SK-N-SH (cell line): ENCODE measurements at regions of chr1 and their contacts with region 1.

Region 1: DNA sequence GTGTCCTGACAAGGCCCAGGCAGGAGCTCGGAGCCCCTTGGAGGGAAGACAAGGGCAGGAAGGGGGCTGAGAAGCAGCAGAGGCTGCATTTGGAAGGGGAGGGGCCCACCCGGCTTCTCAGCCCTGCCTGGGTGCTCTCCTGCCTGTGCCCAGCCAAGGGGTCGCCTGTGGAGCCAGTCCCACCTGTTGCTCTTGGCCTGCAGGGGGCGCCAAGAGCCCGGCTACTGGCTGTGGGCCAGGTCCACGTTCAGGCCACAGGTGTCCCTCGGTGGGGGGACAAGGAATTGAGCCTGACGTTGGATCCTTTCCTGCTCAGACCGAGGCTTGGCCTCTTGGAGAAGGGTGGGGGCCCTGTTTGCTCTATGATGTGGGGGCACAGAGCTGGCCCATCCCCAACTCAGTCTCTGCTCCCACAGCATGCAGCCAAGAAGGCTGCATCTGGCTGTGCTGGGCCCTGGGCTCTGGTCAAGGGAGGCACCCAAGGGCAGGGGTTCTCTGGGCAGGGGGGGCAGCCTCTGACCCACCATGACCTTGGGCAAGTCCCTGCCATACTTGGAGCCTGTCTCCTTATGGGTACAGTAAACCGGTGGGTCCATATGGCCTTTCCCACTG is 10.9 kb downstream of the WNT4 start:
- DNase-seq: peak; percentile 92
- H3K4me3 ChIP-seq: no peak overlapping the region; a peak in 1 of 4 replicates
- H3K27ac ChIP-seq: no peak overlapping the region
- H3K4me1 ChIP-seq: peaks cover 7 to 13% of the 10 kb centered on the region in 2 experiments; a peak in 3 of 4 replicates
- H3K27me3 ChIP-seq: no peaks in the 10 kb centered on the region
- CTCF ChIP-seq: peak; percentile 75
- EP300 ChIP-seq: no peak
- RAD21 ChIP-seq: peak; percentile 87

Region 2: GRCh38 chr1:22105611-22106207 is 26.3 kb before region 1 on chr1:
- CTCF ChIA-PET with region 1: interaction called, 82 read pairs
- POLR2A ChIA-PET with region 1: no interaction called
- DNase-seq: peak; percentile 64
- H3K4me3 ChIP-seq: no peak overlapping the region; a peak in 1 of 4 replicates
- H3K27ac ChIP-seq: no peak overlapping the region; a peak in 2 of 4 replicates
- H3K4me1 ChIP-seq: peaks cover 4 to 22% of the 10 kb centered on the region in 2 experiments; a peak in 1 of 4 replicates
- H3K27me3 ChIP-seq: no peaks in the 10 kb centered on the region
- CTCF ChIP-seq: peak; percentile 86
- EP300 ChIP-seq: no peak
- RAD21 ChIP-seq: peak; percentile 87

Region 3: DNA sequence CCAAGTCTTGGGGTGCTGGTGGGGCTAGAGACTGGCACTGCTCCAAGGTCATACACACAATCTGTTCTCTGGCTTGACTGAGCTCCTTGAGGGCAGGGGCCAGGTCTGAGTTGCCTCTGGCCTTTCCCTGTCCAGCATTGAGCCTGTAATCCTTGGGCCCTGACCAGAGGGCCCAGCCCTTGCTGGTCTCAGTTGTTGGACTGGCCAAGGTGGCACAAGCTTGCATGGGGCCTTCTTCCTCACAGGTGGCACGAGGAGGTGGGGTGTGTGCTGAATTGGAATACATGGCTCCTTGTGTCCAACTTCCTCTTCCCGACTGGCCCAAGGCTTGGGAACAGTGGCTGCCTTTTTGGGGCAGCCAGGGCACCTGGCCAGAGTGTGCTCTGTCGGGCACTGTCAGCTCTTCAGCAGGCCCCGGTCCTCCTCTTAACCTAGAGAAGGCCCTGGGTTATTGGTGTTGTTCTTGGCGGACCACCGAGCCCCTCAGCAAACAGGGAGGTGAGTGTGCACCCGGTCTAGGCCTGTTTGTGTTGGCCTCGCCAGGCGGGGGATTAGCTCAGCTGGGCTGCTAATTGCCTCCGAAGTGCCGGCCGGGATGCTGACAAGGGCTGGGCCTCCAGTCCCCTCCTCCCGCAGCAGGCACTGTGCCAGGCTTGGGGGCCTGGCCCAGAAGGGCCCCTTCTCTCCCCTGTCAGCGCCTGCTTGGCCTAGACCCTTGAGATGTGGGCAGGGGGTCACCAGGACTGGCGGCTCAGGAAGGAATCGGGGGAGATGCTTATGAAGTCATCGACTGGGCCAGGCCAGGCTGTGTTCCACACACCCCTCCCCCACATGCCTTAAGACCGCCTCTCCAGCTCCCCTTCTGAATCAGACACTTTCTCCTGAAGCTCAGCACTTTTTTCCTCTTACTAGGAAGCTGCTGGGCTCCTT is 17.6 kb before region 1 on chr1:
- CTCF ChIA-PET with region 1: interaction called, 82 read pairs
- POLR2A ChIA-PET with region 1: no interaction called
- DNase-seq: peak; percentile 27
- H3K4me3 ChIP-seq: no peak overlapping the region
- H3K27ac ChIP-seq: peak overlapping the region in 1 of 2 experiments; percentile 25; a peak in 1 of 4 replicates
- H3K4me1 ChIP-seq: peaks cover 18 to 57% of the 10 kb centered on the region in 2 experiments
- H3K27me3 ChIP-seq: no peaks in the 10 kb centered on the region
- CTCF ChIP-seq: no peak
- EP300 ChIP-seq: no peak
- RAD21 ChIP-seq: no peak

Region 4: DNA sequence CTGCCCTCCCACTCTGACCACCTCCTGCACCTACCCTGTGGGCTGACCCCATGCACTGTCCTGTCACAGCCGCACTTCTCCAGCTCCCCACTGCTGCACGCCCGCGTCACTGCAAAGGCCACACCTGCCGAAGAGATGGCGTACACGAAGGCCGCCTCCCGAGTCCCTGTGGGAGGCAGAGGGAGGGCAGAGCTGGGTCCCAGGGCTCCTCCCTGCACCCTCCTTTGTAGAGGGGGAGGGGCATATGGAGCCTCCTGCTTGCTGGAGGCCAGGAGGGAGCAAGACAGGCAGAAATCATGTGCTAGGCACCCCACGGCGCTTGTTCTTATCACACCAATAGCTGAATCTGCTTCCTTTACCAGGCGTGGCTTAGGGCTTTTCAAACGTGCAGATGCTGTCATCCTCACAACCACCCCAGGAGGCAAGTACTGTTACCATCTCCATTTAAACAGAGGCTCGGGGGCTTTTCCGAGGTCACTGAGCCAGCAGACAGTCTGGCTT is 10.5 kb before region 1 on chr1:
- CTCF ChIA-PET with region 1: interaction called, 34 read pairs
- POLR2A ChIA-PET with region 1: no interaction called
- DNase-seq: peak; percentile 81
- H3K4me3 ChIP-seq: no peak overlapping the region
- H3K27ac ChIP-seq: peak overlapping the region in 1 of 2 experiments; percentile 74; a peak in 2 of 4 replicates
- H3K4me1 ChIP-seq: peaks cover 0 to 40% of the 10 kb centered on the region in 2 experiments; a peak in 1 of 4 replicates
- H3K27me3 ChIP-seq: no peaks in the 10 kb centered on the region
- CTCF ChIP-seq: no peak
- EP300 ChIP-seq: 0 out of 4 replicates have a peak, but pooled peaks of 1 of the 2 experiments have one; percentile 17
- RAD21 ChIP-seq: no peak

Region 5: GRCh38 chr1:22143065-22144036 is 11.4 kb after region 1 on chr1 and contains the start of gene WNT4:
- CTCF ChIA-PET with region 1: interaction called, 28 read pairs
- POLR2A ChIA-PET with region 1: no interaction called
- DNase-seq: peak; percentile 92
- H3K4me3 ChIP-seq: peak within 1 kb of the TSS; percentile 52 to 53
- H3K27ac ChIP-seq: no peak within 1 kb of the TSS
- H3K4me1 ChIP-seq: peaks cover 0 to 21% of the 10 kb centered on the region in 2 experiments; a peak in 1 of 4 replicates
- H3K27me3 ChIP-seq: peaks cover 5% of the 10 kb centered on the region; the same call in 1 of the 2 replicates
- CTCF ChIP-seq: no peak
- EP300 ChIP-seq: no peak
- RAD21 ChIP-seq: no peak
- polyA plus RNA-seq, gene WNT4: 0.03 and 0.08 TPM in 2 replicates

Region 6: GRCh38 chr1:22275721-22276395 is 143.9 kb after region 1 on chr1:
- CTCF ChIA-PET with region 1: interaction called, 40 read pairs
- POLR2A ChIA-PET with region 1: no interaction called
- DNase-seq: peak; percentile 83
- H3K4me3 ChIP-seq: no peak overlapping the region; a peak in 1 of 4 replicates
- H3K27ac ChIP-seq: no peak overlapping the region
- H3K4me1 ChIP-seq: peaks cover 0 to 2% of the 10 kb centered on the region in 2 experiments; a peak in 1 of 4 replicates
- H3K27me3 ChIP-seq: peaks cover 11% of the 10 kb centered on the region; the same call in 1 of the 2 replicates
- CTCF ChIP-seq: peak; percentile 71
- EP300 ChIP-seq: no peak
- RAD21 ChIP-seq: peak; percentile 79

Region 7: DNA sequence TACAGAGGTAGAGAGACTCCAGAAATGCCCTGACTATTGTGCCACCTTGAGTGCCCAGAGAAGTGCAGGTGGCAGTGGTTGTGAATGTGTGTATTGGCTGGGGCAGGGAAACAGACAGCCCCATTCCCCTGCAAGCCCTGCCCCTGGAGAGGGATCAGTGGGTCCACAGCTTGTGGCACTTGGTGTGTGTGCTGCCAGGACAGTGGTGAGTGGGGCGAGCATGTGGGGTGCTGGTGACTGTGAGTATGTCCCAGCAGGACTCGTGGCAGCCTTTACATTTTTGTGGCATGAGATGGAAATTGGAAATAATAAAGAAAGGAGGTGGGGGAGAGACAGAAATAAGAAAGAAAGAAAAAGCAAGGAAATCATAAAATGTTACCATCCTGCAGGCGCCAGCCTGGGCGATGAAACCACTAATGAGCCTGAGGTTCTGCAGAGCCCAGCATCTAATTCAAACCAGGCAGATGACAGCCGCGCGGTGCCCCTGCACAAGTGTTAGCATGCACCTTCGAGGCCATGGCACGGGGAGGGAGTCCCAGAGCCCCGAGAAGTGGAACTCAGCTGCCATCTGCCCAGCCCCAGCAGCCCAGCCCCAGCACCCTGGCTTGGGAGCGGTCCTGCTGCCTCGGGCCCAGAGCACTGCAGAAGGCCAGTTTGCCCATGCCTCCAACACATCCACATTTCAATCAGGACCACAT is 270.5 kb after region 1 on chr1:
- CTCF ChIA-PET with region 1: interaction called, 173 read pairs
- POLR2A ChIA-PET with region 1: no interaction called
- DNase-seq: peak; percentile 83
- H3K4me3 ChIP-seq: no peak overlapping the region
- H3K27ac ChIP-seq: peak overlapping the region in 1 of 2 experiments; percentile 72; a peak in 2 of 4 replicates
- H3K4me1 ChIP-seq: peaks cover 0 to 25% of the 10 kb centered on the region in 2 experiments; a peak in 1 of 4 replicates
- H3K27me3 ChIP-seq: peaks cover 43% of the 10 kb centered on the region
- CTCF ChIP-seq: no peak
- EP300 ChIP-seq: peak in 1 of 2 experiments; percentile 70; a peak in 1 of 4 replicates
- RAD21 ChIP-seq: no peak; the same call in none of the 2 replicates